ENCODE measurements at regions of chr22 and their contacts with region 1.

Region 1: DNA sequence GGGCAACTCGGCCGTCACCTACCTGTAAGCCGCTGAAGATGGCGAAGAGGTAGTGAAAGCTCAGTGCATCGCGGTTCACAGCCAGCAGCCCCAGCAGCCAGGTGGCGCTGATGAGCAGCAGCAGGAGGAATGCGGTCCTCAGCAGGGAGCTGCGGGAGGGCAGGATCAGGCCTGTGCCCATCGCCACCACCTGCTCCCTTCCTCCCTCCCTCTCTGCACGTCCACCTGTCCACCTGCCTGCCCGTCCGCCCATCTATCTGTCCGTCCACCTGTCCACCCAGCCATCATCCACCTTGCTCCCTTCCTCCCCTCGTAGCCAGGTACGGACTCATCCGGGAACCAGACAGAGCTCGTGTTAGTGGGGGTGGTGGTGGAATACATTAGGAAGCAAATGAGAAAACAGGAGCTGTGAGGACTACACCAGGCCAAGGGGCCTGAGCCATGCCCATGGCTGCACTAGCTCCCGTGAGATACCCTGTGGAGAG is 32.2 kb downstream of the TRMU start:
- DNase-seq: peak; percentile 80
- ATAC-seq: peak; percentile 80
- H3K4me3 Mint-ChIP-seq: no peak overlapping the region
- H3K27ac Mint-ChIP-seq: no peak overlapping the region
- H3K4me1 Mint-ChIP-seq: peaks cover 17% of the 10 kb centered on the region
- H3K27me3 Mint-ChIP-seq: peaks cover 11% of the 10 kb centered on the region

Region 2: DNA sequence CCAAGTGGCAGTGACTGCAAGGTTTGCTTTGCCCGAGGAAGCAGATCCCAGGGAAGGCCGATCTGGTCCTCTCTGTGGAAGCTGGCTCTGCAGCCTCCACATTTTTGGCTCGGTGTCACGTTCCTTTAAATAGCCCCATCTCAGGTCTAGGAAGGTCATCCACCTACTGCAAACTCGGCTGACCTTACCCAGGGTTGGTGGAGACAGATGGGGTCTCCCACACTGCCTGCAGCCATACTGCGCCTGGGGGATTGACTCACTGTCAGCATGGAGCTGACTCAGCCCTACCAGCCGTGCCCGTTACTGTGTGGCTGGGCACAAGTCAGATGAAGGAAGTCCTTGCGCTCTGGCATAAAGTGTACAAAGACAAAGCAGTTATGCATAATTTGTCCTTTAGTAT is 134.5 kb before region 1 on chr22:
- CTCF ChIA-PET with region 1: no interaction called
- POLR2A ChIA-PET with region 1: no interaction called
- DNase-seq: no peak
- ATAC-seq: no peak
- H3K4me3 Mint-ChIP-seq: no peak overlapping the region
- H3K27ac Mint-ChIP-seq: no peak overlapping the region
- H3K4me1 Mint-ChIP-seq: no peaks in the 10 kb centered on the region
- H3K27me3 Mint-ChIP-seq: no peaks in the 10 kb centered on the region

Region 3: DNA sequence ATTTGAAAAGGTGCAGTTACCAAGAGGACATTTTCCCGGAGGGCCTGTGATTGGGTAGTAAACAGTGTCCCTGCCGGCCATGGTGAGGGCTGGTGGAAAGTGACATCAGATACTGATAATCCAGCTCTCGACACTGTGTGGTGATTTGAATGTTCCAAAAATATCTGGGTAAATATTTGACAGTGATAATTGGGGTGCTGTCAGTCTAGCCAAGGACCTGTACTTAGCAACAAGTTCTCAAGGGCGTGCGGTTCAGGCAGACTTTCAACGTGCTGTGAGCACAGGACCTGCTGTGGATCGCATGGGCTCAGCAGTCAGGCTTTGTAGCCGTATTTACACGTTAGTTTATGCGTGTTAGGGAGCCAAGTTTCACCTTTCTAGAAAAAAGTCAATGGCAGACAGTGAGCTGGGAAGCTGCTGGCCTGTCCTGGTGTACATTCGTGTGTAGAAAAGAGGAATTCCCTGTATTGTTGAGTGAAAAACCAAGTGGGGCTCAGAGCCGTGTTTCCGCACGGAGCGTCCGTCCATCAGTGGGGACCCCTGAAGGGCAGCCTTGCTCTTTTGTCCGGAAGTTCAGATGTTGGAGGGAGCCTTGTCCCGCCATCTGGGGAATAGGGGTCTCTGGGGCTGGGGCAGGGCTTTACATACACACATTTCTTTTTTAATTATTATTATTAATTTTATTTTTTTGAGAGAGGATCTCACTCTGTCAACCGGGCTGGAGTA is 20.9 kb before region 1 on chr22:
- CTCF ChIA-PET with region 1: no interaction called
- POLR2A ChIA-PET with region 1: no interaction called
- DNase-seq: no peak
- ATAC-seq: no peak
- H3K4me3 Mint-ChIP-seq: no peak overlapping the region
- H3K27ac Mint-ChIP-seq: no peak overlapping the region
- H3K4me1 Mint-ChIP-seq: no peaks in the 10 kb centered on the region
- H3K27me3 Mint-ChIP-seq: no peaks in the 10 kb centered on the region

Region 4: DNA sequence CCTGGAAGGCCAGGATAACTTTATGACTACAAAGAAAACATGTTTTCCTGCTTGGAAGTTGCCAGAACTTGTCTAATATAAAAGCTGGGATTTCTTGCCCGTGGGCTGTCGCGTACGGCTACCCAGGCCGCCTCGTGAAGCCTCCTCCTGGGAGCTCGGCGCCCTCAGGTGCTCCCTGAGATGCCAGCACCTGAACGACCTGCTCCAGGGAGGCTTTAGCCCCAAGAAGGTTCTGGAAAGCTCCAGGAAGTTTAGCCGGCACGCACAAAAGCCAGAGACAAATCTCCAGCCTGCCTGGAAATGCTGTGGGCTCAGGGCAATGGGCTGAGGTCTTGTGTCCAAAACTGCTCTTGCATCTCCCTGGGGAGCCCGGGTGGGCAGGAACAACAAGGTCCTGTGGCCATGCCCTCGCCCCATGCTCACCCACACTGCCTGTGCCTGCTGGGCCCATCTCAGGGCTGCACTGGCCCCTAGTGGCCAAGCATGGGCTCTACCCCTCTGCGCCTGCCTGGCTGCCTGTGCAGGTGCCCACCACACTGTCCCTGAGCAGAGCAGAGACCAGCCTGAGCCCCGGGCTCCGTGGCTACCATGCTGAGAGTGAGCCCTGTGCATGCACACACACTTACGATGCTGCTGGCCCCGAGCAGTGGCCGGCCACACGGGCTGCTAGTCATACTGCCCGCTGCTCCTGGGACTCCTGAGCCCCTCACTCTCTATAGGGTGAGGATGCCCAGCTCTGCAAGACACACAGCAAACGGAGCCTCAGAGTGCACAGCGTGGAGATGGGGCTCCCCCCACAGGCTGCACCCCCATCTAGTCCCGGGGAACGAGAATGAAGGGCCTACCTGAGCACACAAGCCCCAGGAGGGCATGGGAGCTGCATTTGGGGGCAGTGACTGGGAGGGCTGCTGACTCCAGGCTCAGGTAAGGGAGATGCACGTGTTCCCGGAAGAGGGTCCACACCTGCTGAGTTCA is 174.5 kb after region 1 on chr22:
- CTCF ChIA-PET with region 1: interaction called, 68 read pairs
- POLR2A ChIA-PET with region 1: no interaction called
- DNase-seq: peak; percentile 76
- ATAC-seq: peak; percentile 99
- H3K4me3 Mint-ChIP-seq: no peak overlapping the region
- H3K27ac Mint-ChIP-seq: no peak overlapping the region
- H3K4me1 Mint-ChIP-seq: peaks cover 5% of the 10 kb centered on the region
- H3K27me3 Mint-ChIP-seq: peaks cover 33% of the 10 kb centered on the region